OCI-LY7 (cell line): ENCODE measurements at regions of chr1 and their contacts with region 1.

Region 1: DNA sequence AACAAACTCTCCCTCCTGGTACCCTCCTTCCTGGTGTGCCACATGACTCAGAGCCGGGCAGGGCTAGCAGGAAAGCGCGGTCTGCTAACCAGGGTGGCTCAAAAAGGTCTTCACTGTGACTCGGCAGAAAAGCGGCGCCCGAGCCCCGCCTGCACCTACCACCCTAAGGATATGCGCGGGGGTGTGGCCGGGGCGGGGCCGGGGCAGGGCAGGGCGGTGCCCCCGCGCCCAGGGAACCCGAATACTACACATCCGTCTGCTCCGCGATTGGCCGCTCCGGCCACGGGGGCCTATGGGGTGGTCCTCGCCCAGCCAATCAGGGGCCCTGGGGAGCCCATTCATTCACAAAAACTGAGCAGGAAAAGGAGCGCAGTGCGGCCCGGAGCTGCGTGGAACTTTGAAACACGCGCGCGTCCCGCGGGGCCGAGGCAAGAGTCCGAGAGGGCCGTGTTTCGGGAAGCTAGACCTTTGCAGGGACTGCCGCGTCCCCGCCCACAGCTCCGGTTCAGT is 1.7 kb downstream of the LRP8 start:
- DNase-seq: peak; percentile 97
- H3K4me3 ChIP-seq: peak overlapping the region; percentile 91
- H3K27ac ChIP-seq: peak overlapping the region; percentile 83
- H3K4me1 ChIP-seq: peaks cover 23% of the 10 kb centered on the region
- CTCF ChIP-seq: no peak

Region 2: GRCh38 chr1:53145942-53146708 is 180.0 kb before region 1 on chr1:
- CTCF ChIA-PET with region 1: no interaction called
- POLR2A ChIA-PET with region 1: no interaction called
- intact Hi-C with region 1: no loop called
- DNase-seq: no peak
- H3K4me3 ChIP-seq: no peak overlapping the region
- H3K27ac ChIP-seq: no peak overlapping the region
- H3K4me1 ChIP-seq: peaks cover 5% of the 10 kb centered on the region
- CTCF ChIP-seq: no peak

Region 3: GRCh38 chr1:53220171-53220961 is 105.8 kb before region 1 on chr1 and contains the start of gene CZIB:
- CTCF ChIA-PET with region 1: no interaction called
- POLR2A ChIA-PET with region 1: no interaction called
- intact Hi-C with region 1: loop called (anchors 1 kb)
- DNase-seq: peak; percentile 94
- H3K4me3 ChIP-seq: peak within 1 kb of the TSS; percentile 80
- H3K27ac ChIP-seq: peak within 1 kb of the TSS; percentile 67
- H3K4me1 ChIP-seq: peaks cover 13% of the 10 kb centered on the region
- CTCF ChIP-seq: no peak
- total RNA-seq, gene CZIB: 51.4 and 67.3 TPM in 2 replicates

Region 4: DNA sequence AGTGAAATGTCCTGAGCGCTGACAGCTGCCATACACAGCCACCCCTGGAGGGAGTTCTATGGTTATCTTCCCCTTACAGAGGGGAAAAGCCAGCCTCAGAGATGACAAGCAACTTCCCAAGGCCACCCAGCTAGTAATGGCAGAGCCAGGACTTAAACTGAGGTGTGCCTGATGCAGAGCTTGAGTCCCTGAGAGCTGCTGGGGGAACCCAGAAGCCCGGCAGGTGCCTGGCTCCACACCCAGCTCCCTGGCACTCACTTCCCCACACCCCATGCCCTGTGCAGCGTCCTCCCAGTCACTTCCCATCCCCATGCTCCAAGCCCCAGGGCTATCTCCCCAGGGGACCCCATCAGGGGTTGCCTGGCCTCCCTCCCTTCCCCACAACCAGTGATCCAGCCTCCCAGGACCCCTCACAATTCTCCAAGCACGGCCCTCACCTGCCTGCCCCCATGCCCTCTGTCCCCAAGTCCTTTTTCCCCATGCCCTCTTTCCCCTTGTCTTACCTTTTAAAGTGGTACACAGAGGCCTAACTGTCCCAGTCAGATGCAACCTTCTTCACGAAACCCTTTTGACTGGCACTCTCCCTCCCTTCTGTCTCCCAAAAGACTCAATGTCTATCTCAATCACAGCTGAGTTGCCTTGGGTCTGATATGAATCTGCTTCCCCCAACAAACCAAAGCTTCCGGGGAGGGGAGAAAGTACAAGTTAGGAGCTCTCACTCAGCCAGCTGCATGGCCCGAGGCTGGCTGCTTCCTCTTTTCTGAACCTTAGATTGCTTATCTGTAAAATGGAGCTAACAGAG is 41.6 kb after region 1 on chr1:
- CTCF ChIA-PET with region 1: no interaction called
- POLR2A ChIA-PET with region 1: interaction called, 4 read pairs
- intact Hi-C with region 1: loop called (anchors 5 kb)
- DNase-seq: peak; percentile 82
- H3K4me3 ChIP-seq: peak overlapping the region; percentile 62
- H3K27ac ChIP-seq: peak overlapping the region; percentile 51
- H3K4me1 ChIP-seq: peaks cover 9% of the 10 kb centered on the region
- CTCF ChIP-seq: no peak

Region 5: GRCh38 chr1:53378061-53378460 is 51.9 kb after region 1 on chr1:
- CTCF ChIA-PET with region 1: no interaction called
- POLR2A ChIA-PET with region 1: no interaction called
- intact Hi-C with region 1: no loop called
- DNase-seq: no peak
- H3K4me3 ChIP-seq: no peak overlapping the region
- H3K27ac ChIP-seq: no peak overlapping the region
- H3K4me1 ChIP-seq: no peaks in the 10 kb centered on the region
- CTCF ChIP-seq: no peak

Region 6: GRCh38 chr1:53498555-53499142 is 172.5 kb after region 1 on chr1:
- CTCF ChIA-PET with region 1: no interaction called
- POLR2A ChIA-PET with region 1: no interaction called
- intact Hi-C with region 1: no loop called
- DNase-seq: no peak
- H3K4me3 ChIP-seq: no peak overlapping the region
- H3K27ac ChIP-seq: no peak overlapping the region
- H3K4me1 ChIP-seq: no peaks in the 10 kb centered on the region
- CTCF ChIP-seq: no peak

Region 7: DNA sequence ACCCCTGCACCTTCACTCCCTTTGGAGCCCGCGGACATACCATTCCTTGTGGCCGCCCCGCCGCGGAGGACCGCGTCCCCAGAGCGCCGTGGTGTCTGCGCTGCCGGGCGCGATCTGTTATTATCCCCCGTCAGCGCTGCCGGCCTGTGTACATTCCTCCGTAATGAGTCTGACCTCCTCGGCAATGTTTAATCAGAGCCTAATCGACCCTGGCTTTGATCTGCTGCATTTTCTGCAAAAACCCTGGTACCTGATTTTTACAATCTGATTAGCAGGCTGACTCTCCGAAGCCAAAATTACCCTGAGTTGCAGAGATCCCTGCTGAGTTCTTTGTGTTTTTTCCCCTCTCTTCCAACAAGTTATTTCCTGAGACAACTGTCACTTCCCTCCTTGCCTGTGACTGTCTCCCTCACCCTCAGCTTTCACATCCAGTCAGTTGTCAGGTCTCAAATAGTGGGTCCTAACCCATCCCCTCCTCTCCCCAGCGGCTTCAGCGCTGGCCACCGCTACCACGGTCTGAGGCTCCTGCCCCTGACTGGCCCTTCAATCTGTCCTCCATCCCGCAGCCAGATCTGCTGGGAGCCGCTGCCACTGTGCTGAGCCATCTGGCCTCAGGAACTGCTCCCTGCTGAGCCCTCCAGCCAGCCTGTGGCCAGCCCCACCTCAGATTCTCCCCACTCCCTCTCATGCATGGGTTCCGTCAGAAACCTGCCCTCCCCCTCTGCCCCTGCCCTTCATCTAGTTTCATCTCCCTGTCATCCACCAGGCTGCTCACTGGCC is 359.3 kb after region 1 on chr1:
- CTCF ChIA-PET with region 1: no interaction called
- POLR2A ChIA-PET with region 1: no interaction called
- intact Hi-C with region 1: no loop called
- DNase-seq: no peak
- H3K4me3 ChIP-seq: no peak overlapping the region
- H3K27ac ChIP-seq: no peak overlapping the region
- H3K4me1 ChIP-seq: no peaks in the 10 kb centered on the region
- CTCF ChIP-seq: no peak

Region 8: DNA sequence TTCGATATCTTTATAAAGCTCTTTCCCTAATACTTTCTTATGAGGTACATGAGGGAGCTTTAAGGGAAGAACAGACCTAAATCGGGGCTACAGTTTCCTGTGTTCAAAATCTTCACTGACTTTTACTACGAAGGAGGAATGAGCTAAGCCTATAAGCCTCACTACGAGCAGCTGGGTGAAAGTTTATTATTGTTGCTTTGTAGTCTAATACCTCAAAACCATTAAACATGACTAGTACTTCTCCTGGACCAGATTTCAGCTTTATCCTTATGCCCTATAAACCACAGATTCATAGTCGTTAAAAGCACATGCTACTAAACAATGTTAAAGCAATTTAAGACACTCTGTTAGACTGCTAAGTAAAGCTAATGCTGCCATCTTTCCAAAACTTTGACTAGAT is 481.8 kb after region 1 on chr1:
- CTCF ChIA-PET with region 1: no interaction called
- POLR2A ChIA-PET with region 1: no interaction called
- intact Hi-C with region 1: loop called (anchors 5 kb)
- DNase-seq: no peak
- H3K4me3 ChIP-seq: no peak overlapping the region
- H3K27ac ChIP-seq: no peak overlapping the region
- H3K4me1 ChIP-seq: no peaks in the 10 kb centered on the region
- CTCF ChIP-seq: no peak